Lower lobe of right lung (tissue), 2 donors: ENCODE measurements at regions of chr2 and their contacts with region 1.

Region 1: DNA sequence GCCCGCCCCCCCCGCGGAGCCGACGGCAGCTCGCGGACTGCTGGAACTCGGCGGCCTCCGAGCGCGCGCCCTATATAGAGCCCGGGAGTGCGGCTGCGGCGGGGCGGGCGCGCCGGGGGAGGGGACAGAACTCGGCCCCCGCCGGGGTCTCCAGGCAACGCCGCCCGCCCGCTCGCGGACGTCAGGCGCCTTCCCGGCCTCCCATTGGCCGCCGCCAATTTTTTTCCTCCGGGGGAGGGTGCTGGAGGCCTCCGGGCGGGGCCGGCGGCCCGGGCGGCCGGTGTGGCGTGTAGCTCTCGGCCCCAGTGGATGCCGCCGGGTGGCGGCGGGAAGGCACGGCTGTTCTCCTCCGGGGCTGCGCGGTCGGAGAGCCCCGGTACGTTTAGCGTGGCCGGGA is at the start of gene ZFP36L2:
- DNase-seq: peak; percentile 98
- ATAC-seq: peak; percentile 86 to 92
- H3K4me3 ChIP-seq: peak within 1 kb of the TSS; percentile 95
- H3K27ac ChIP-seq: peak within 1 kb of the TSS; percentile 100
- H3K4me1 ChIP-seq: peaks cover 44% of the 10 kb centered on the region
- H3K27me3 ChIP-seq: no peaks in the 10 kb centered on the region
- CTCF ChIP-seq: no peak
- total RNA-seq, gene ZFP36L2: 136 TPM

Region 2: GRCh38 chr2:43178602-43179542 is 47.7 kb before region 1 on chr2:
- intact Hi-C with region 1: loop called (anchors 10 kb)
- DNase-seq: peak; percentile 81
- ATAC-seq: peak; percentile 83 to 90
- H3K4me3 ChIP-seq: no peak overlapping the region
- H3K27ac ChIP-seq: peak overlapping the region; percentile 84
- H3K4me1 ChIP-seq: peaks cover 39% of the 10 kb centered on the region
- H3K27me3 ChIP-seq: no peaks in the 10 kb centered on the region
- CTCF ChIP-seq: no peak